ENCODE measurements at regions of chr21 and their contacts with region 1.

Region 1: DNA sequence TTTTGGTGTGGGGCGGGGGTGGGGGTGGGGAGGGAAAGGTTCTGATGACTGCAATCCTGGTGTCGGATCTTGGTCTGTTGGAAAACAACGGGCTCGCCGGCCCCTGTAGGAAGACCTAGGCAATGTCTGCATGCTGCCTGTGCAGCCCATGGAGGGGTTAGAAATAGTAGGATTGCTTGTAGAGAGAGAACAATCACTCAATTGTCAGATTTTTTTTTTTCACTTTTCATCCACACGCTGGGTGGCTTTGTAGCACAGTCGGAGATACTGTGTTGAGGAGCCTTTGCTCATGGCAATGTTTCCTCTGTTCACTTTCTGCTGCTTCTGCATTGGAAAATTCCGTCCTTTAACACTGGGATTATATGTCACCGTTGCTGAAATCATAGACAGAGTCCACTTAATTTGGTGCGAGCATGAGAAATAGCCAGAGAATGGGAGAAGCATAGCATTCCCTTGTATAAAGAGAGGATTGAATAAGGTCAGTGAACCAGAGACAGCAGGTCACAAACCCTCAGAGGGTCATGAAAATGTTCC is 107.5 kb downstream of the MRPS6 start:
- DNase-seq: no peak
- ATAC-seq: peak; percentile 86

Region 2: GRCh38 chr21:32298148-32298559 is 1882.7 kb before region 1 on chr21:
- intact Hi-C with region 1: no loop called
- DNase-seq: no peak
- ATAC-seq: peak; percentile 65

Region 3: DNA sequence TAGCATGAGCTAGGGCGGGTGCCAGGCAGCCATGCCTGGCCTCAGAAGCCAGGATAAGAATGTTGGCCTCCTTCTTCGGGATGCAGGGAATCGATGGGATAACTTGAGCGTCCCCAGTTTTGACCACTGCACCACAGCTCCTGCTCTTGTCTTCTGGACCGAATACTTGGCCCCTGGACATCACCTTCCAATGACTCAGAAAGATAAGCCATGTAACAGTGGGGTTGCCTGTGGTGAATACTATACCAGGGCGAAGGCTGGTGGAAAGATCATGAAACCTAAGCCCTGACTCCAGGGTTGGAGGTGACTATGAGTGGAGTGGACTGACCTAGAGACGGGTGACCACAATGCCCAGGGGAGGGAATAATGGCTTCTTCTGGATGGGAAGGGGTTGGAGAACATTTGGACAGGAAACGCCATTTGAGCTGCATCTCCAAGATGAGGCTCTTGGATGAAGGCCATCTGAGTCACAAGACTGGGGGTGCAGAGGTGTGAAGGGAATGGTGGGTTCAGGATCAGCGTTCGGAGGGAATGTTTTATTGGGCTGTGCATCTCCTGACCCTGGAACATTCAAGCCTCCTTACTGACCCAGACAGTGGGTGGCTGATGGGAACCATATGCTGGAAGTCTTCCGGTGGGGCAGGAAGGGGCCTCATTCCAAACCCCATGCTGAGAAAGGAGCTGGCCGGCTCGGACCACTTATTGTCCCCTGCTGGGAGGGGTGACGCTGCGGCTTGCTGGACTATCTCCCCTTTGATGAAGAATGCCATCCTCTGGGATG is 164.4 kb after region 1 on chr21:
- intact Hi-C with region 1: loop called (anchors 5 kb)
- DNase-seq: no peak
- ATAC-seq: peak; percentile 73